WTC11 (cell line): ENCODE measurements at regions of chr20 and their contacts with region 1.

Region 1: GRCh38 chr20:34254979-34255378 is 13.8 kb downstream of the ASIP start:
- DNase-seq: no peak
- ATAC-seq: no peak
- H3K4me3 Mint-ChIP-seq: no peak overlapping the region
- H3K27ac Mint-ChIP-seq: no peak overlapping the region
- H3K4me1 Mint-ChIP-seq: peaks cover 14% of the 10 kb centered on the region
- H3K27me3 Mint-ChIP-seq: no peaks in the 10 kb centered on the region
- CTCF ChIP-seq: no peak

Region 2: DNA sequence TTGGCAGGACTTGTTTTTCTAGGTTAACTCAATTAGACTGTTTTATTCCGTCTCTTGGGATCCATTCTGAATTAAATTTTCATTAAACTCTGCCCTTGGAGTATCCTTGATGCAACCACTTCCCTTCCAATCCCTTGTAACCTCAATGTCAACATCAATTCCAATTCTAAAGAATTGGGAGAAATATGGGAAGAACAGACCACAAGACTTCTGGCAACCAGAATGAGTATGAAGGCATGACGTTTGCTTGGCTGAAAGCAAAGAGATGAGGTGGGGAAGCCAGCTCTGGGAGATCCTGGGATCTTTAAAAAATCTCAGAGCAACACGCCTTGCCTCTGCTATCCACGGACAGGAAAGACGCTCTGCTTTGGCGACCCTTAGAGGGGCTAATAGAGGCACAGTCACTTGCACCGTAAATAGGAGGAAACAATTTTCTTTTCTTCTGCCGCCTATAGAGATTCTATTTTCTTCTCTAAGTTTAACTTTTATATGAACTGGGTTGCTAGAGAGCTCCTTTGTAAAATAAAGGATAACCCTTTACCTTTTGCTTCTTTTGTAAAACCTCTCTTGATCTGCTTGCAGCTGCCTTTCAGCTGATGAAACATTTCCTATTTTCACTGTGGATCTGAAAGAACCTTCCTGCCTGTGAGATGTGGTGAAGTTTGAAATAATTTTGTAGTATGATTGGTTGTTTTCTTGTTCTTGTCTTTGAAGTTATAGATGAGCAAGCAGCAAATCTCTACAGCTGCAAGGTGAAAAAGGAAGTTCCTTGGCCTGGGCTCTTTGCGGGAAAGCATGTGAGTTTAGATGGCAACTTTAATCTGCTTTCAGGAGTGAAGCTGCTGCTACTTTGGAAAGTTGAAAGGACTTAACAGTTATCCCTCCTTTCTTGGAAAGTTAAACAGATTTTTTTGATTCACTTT is 14.0 kb before region 1 on chr20 and contains the start of gene ASIP:
- CTCF ChIA-PET with region 1: interaction called, 12 read pairs
- POLR2A ChIA-PET with region 1: interaction called, 5 read pairs
- DNase-seq: no peak
- ATAC-seq: no peak
- H3K4me3 Mint-ChIP-seq: no peak within 1 kb of the TSS
- H3K27ac Mint-ChIP-seq: no peak within 1 kb of the TSS
- H3K4me1 Mint-ChIP-seq: peaks cover 8% of the 10 kb centered on the region
- H3K27me3 Mint-ChIP-seq: peaks cover 7% of the 10 kb centered on the region; the same call in 1 of the 2 replicates
- CTCF ChIP-seq: no peak
- total RNA-seq, gene ASIP: not detected in 3 replicates

Region 3: GRCh38 chr20:34282041-34282440 is 27.1 kb after region 1 on chr20:
- CTCF ChIA-PET with region 1: no interaction called
- POLR2A ChIA-PET with region 1: no interaction called
- DNase-seq: no peak
- ATAC-seq: no peak
- H3K4me3 Mint-ChIP-seq: no peak overlapping the region
- H3K27ac Mint-ChIP-seq: no peak overlapping the region
- H3K4me1 Mint-ChIP-seq: no peaks in the 10 kb centered on the region
- H3K27me3 Mint-ChIP-seq: no peaks in the 10 kb centered on the region
- CTCF ChIP-seq: no peak